ENCODE measurements at regions of chr1 and their contacts with region 1.

Region 1: GRCh38 chr1:245797592-245798348 is 643.0 kb downstream of the KIF26B start:
- DNase-seq: peak in 1 of 2 experiments; percentile 82
- H3K4me3 ChIP-seq: no peak overlapping the region
- H3K27ac ChIP-seq: no peak overlapping the region
- H3K4me1 ChIP-seq: no peaks in the 10 kb centered on the region
- H3K27me3 ChIP-seq: no peaks in the 10 kb centered on the region
- CTCF ChIP-seq: peak; percentile 46 to 53 (median 51)
- EP300 ChIP-seq: no peak
- POLR2A ChIP-seq: no peak
- RAD21 ChIP-seq: peak; percentile 10 to 40; a peak in 2 of 4 replicates

Region 2: GRCh38 chr1:245621589-245621988 is 176.2 kb before region 1 on chr1:
- CTCF ChIA-PET with region 1: no interaction called
- POLR2A ChIA-PET with region 1: no interaction called
- DNase-seq: no peak
- H3K4me3 ChIP-seq: no peak overlapping the region
- H3K27ac ChIP-seq: no peak overlapping the region
- H3K4me1 ChIP-seq: peaks cover 0 to 6% (median 2%) of the 10 kb centered on the region in 4 experiments; a peak in 2 of 7 replicates
- H3K27me3 ChIP-seq: no peaks in the 10 kb centered on the region
- CTCF ChIP-seq: no peak
- EP300 ChIP-seq: no peak
- POLR2A ChIP-seq: no peak
- RAD21 ChIP-seq: no peak

Region 3: GRCh38 chr1:245645894-245646293 is 151.9 kb before region 1 on chr1:
- CTCF ChIA-PET with region 1: no interaction called
- POLR2A ChIA-PET with region 1: no interaction called
- DNase-seq: no peak
- H3K4me3 ChIP-seq: no peak overlapping the region
- H3K27ac ChIP-seq: no peak overlapping the region
- H3K4me1 ChIP-seq: peaks cover 0 to 3% (median 2%) of the 10 kb centered on the region in 4 experiments; a peak in 1 of 7 replicates
- H3K27me3 ChIP-seq: no peaks in the 10 kb centered on the region
- CTCF ChIP-seq: no peak
- EP300 ChIP-seq: no peak
- POLR2A ChIP-seq: no peak
- RAD21 ChIP-seq: no peak

Region 4: GRCh38 chr1:245810789-245811337 is 13.1 kb after region 1 on chr1:
- CTCF ChIA-PET with region 1: interaction called, 23 read pairs
- POLR2A ChIA-PET with region 1: interaction called, 3 read pairs
- DNase-seq: peak in 1 of 2 experiments; percentile 26
- H3K4me3 ChIP-seq: no peak overlapping the region
- H3K27ac ChIP-seq: no peak overlapping the region
- H3K4me1 ChIP-seq: peaks cover 0 to 7% (median 3%) of the 10 kb centered on the region in 4 experiments; a peak in 4 of 7 replicates
- H3K27me3 ChIP-seq: no peaks in the 10 kb centered on the region
- CTCF ChIP-seq: no peak
- EP300 ChIP-seq: no peak
- POLR2A ChIP-seq: no peak
- RAD21 ChIP-seq: no peak

Region 5: DNA sequence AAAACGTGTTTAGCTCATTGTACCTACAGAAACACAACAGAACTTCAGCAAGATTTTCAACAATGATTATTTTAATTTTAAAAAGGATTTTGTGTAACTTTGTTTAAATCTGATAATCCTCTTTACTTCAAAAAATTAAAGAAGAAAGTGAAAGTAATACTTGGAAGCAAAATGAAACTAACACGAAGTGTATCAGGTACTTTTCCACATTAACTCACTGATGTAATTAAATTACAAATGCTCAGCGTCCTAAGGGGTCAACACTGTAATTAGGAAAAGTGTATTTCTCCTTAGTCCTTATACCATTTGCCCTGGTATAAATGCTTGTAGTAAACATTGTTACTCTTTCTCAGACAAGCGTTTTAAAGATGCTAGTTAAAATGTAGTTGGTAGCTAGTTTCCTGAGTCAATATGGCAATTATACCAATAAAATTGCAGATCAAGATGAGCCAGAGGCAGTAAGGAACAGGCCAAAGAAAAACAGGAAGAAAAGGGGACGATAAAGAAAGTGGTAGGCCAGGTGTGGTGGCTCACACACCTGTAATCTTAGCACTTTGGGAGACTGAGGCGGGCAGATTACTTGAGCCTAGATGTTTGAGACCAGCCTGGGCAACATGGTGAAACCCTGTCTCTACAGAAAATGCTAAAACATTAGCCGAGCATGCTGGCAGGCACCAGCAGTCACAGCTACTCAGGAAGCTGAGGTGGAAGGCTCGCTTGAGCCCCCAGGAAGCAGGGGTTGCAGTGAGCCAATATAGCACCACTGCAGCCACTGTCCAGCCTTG is 156.3 kb after region 1 on chr1:
- CTCF ChIA-PET with region 1: no interaction called
- POLR2A ChIA-PET with region 1: no interaction called
- DNase-seq: no peak
- H3K4me3 ChIP-seq: no peak overlapping the region
- H3K27ac ChIP-seq: no peak overlapping the region
- H3K4me1 ChIP-seq: no peaks in the 10 kb centered on the region
- H3K27me3 ChIP-seq: no peaks in the 10 kb centered on the region
- CTCF ChIP-seq: no peak
- EP300 ChIP-seq: no peak
- POLR2A ChIP-seq: no peak
- RAD21 ChIP-seq: no peak